Lower lobe of right lung (tissue), 2 donors: ENCODE measurements at regions of chr1 and their contacts with region 1.

Region 1: DNA sequence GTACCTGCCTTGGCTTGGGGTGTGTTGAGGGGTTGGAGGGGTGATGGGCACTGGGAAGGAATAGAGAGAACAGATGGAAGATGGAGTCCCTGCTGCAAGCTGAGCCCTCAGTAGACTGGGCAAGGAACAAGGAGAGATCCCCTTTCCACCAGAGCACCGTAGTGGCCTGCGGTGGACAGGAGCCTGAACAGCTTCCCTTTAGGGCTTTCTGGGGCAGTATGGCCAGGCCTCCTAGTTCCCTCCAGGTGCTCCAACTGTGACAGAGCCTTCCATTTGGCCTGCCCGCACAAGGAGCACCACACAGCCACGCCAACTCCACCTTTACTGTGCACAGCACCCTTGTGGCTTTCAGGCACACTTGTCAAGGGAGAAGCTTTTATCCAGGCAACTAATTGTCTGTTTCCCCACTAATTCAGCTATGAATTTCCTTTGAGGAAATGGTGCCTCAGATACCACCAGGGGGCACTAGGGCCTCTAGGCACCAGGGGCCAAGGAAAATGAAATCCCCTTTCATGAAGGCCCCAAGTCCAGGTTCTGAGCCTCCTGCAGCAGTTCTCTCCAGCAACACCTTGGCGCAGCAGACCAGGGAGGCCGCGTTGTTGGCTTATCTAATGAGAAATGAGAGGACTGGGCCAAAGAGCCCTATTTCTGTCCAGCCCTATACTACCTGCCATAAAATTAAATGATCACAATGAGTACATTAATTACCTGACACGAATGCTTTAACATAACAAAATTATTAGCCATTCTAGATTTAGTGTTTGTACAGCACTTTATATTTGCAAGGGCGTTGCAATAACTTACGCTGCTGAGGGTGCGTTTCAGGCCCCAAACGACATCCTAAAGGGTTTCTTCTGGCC is 23.1 kb upstream of the ERI3 start:
- DNase-seq: peak; percentile 57
- ATAC-seq: peak; percentile 50 to 74
- H3K4me3 ChIP-seq: no peak overlapping the region
- H3K27ac ChIP-seq: no peak overlapping the region
- H3K4me1 ChIP-seq: no peaks in the 10 kb centered on the region
- H3K27me3 ChIP-seq: no peaks in the 10 kb centered on the region
- CTCF ChIP-seq: peak; percentile 74

Region 2: DNA sequence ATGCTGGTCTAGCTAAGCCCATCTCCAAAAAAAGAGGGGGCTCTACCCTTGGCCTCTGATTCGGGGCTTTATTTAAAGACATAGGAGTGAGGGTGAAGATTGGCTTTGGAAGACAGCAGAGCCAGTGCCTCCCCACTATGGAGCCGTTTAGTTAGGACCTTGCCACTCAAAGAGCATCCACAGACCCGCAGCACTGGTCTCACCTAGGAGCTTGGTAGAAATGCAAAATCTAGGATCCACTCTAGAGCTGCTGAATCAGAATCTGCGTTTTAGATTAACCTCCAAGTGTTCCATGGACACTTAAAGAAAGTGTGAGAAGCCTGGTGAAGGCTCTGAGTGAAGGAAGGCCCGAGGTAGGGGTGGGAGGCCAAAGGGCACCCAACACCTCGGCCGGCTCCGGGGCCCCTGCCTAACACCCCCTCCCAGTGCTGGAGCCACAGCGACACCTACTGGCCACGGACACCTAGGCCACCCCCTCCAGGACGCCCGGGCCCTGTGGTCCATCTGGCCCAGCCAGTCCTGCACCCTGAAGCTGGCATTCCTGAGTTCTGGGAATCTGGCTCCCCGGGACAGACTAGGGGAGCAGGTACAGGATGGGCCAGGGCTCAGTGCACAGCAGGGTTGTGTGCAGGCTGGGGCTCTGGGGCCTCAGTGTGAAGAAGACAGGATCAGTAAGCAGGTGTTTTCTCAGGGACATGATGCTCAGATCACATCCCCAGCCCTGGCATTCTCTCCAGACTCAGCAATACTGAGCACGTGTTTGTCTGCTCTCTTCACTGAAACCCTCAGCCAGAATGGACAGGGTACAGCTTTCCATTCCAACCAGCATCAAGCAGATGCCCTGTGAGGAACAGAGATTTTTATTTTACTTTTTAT is 217.0 kb after region 1 on chr1:
- intact Hi-C with region 1: loop called (anchors 10 kb)
- DNase-seq: peak; percentile 87
- ATAC-seq: peak; percentile 92 to 93
- H3K4me3 ChIP-seq: no peak overlapping the region
- H3K27ac ChIP-seq: no peak overlapping the region
- H3K4me1 ChIP-seq: no peaks in the 10 kb centered on the region
- H3K27me3 ChIP-seq: peaks cover 17% of the 10 kb centered on the region
- CTCF ChIP-seq: peak; percentile 99